ENCODE measurements at regions of chr9 and their contacts with region 1.

Region 1: DNA sequence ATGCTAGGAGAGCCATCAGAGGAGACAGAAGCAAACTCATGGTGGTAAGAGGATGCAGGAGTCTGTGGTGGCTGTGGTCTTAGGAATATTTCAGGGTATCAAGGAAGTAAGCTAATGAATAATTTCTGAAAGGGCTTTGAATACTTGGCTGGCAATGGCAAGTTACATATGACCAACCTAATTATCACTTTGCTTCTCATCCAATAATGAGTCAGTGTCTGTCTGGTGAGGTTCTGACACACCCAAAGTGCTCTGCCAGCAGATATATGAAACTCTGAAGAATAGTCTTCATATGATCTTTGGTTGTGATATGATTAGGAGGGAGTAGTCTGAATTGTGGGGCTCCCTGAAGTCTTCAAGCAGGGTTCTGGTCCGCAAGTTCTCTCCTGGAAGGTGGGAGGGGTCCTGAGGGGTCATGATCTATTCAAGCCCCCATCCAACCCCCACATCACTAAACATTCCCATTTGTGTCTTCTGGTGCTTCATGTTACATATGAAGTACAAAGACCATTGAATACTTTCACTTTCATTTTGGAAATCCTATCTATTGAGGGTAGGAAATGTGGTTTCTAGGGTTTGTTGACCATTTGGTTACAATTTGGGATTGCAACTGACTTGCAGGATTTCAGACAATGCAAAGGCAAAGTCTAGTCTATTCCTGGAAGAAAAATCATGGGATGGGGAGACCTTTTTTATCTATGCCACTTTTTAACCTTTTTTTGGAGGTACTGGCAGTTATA is 199.9 kb upstream of the CDKN2B start:
- DNase-seq: peak; percentile 39
- ATAC-seq: peak; percentile 84
- H3K4me3 Mint-ChIP-seq: peak overlapping the region; percentile 5
- H3K27ac Mint-ChIP-seq: peak overlapping the region; percentile 43
- H3K4me1 Mint-ChIP-seq: peaks cover 31% of the 10 kb centered on the region
- H3K27me3 Mint-ChIP-seq: no peaks in the 10 kb centered on the region
- CTCF ChIP-seq: no peak

Region 2: DNA sequence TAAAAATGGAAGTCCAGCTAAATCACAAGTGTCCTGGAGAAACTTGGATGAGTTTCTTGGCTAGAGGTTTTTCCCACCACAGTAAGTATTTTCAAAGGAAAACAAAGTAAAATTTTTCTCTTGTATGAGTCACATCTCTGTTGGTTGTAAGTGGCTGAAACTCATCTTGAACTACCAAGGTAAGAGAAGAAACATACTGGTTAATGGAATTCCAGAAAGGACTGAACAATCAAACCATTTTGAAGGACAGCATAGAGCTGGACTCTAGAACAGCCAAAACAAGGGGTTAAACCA is 97.1 kb before region 1 on chr9:
- CTCF ChIA-PET with region 1: no interaction called
- POLR2A ChIA-PET with region 1: no interaction called
- intact Hi-C with region 1: no loop called
- DNase-seq: no peak
- ATAC-seq: no peak
- H3K4me3 Mint-ChIP-seq: no peak overlapping the region
- H3K27ac Mint-ChIP-seq: no peak overlapping the region
- H3K4me1 Mint-ChIP-seq: no peaks in the 10 kb centered on the region
- H3K27me3 Mint-ChIP-seq: peaks cover 25% of the 10 kb centered on the region
- CTCF ChIP-seq: no peak

Region 3: GRCh38 chr9:22147813-22148524 is 61.0 kb before region 1 on chr9:
- CTCF ChIA-PET with region 1: no interaction called
- POLR2A ChIA-PET with region 1: no interaction called
- intact Hi-C with region 1: loop called (anchors 2 kb)
- DNase-seq: peak; percentile 47
- ATAC-seq: peak; percentile 98
- H3K4me3 Mint-ChIP-seq: no peak overlapping the region
- H3K27ac Mint-ChIP-seq: no peak overlapping the region
- H3K4me1 Mint-ChIP-seq: peaks cover 21% of the 10 kb centered on the region
- H3K27me3 Mint-ChIP-seq: peaks cover 10% of the 10 kb centered on the region
- CTCF ChIP-seq: no peak